Gastrocnemius medialis (tissue), 4 donors: ENCODE measurements at regions of chr22 and their contacts with region 1.

Region 1: GRCh38 chr22:38872172-38872830 is at the start of gene CBX6:
- DNase-seq: peak; percentile 91 to 93
- ATAC-seq: peak; percentile 83 to 87
- H3K4me3 ChIP-seq: peak within 1 kb of the TSS; percentile 77 to 98 (median 90)
- H3K27ac ChIP-seq: peak within 1 kb of the TSS; percentile 86 to 99 (median 97)
- H3K4me1 ChIP-seq: peaks cover 12 to 32% of the 10 kb centered on the region in 2 donors
- H3K27me3 ChIP-seq: no peaks in the 10 kb centered on the region
- CTCF ChIP-seq: peak in 2 of 5 experiments; percentile 25 to 41
- POLR2A ChIP-seq: peak; percentile 74 to 79
- total RNA-seq, gene CBX6: 8.4 to 21.5 (median 17.7) TPM

Region 2: GRCh38 chr22:38766076-38766777 is 106.1 kb before region 1 on chr22:
- in situ Hi-C with region 1: no loop called
- intact Hi-C with region 1: loop called (anchors 10 kb)
- DNase-seq: peak; percentile 68 to 71
- ATAC-seq: peak; percentile 76 to 79
- H3K4me3 ChIP-seq: no peak overlapping the region
- H3K27ac ChIP-seq: no peak overlapping the region
- H3K4me1 ChIP-seq: peaks cover 4 to 11% of the 10 kb centered on the region in 2 donors
- H3K27me3 ChIP-seq: peaks cover 0 to 14% (median 8%) of the 10 kb centered on the region in 3 donors
- CTCF ChIP-seq: peak; percentile 58 to 81 (median 75)
- POLR2A ChIP-seq: no peak

Region 3: DNA sequence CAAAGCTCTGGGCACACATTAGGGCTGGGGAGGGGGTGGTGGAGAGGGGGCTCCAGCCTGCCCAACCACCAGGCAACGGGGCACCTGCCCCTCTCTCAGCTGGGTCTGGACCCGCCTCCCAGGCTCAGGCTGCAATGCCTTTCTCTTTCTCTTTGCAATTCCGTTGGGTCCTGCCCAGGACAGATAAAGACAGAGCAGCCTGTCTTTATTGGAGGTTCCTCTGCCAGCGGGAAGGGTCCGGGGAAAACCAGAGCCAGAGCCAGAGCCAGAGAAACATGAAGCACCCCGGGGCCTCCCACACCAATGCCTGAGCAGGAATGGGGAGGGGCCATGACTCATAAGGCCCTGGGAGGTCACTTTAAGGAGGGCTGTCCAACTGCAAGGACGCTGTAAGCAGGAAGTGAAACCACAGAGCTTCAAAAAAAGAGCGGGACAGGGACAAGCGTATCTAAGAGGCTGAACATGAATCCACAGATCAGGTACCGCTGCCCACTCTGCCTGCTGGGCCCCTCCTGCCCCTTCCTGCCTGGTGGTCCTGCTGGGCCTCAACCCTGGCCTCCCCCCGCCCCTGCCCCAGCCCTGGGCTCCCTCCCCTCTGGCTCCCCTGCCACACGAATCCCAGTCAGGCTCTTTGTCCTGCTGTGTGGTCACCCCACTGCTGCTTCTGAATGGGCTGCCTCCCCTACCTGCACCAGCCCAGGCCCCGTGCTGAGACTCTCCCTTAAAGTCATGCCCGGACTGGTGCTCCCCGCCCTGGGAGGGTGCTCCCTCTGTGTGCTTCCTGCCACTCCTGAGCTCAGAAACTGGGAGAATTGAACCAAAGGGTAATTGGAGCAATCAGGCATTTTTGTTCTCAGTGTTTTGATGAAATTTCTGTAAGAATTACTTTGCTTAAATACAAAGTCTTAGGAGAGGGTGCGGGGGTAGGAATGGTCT is 110.0 kb after region 1 on chr22 and contains the start of gene APOBEC3B:
- in situ Hi-C with region 1: no loop called
- intact Hi-C with region 1: loop called (anchors 5 kb)
- DNase-seq: peak; percentile 73 to 85
- ATAC-seq: peak; percentile 98 to 100
- H3K4me3 ChIP-seq: peak within 1 kb of the TSS in 3 of 4 donors; percentile 56 to 68 (median 57)
- H3K27ac ChIP-seq: peak within 1 kb of the TSS in 2 of 4 donors; percentile 33 to 42
- H3K4me1 ChIP-seq: peaks cover 9 to 13% of the 10 kb centered on the region in 2 donors
- H3K27me3 ChIP-seq: no peaks in the 10 kb centered on the region
- CTCF ChIP-seq: no peak
- POLR2A ChIP-seq: no peak
- total RNA-seq, gene APOBEC3B: 0.62 TPM in 1 of 4 donors, not detected in the others

Region 4: DNA sequence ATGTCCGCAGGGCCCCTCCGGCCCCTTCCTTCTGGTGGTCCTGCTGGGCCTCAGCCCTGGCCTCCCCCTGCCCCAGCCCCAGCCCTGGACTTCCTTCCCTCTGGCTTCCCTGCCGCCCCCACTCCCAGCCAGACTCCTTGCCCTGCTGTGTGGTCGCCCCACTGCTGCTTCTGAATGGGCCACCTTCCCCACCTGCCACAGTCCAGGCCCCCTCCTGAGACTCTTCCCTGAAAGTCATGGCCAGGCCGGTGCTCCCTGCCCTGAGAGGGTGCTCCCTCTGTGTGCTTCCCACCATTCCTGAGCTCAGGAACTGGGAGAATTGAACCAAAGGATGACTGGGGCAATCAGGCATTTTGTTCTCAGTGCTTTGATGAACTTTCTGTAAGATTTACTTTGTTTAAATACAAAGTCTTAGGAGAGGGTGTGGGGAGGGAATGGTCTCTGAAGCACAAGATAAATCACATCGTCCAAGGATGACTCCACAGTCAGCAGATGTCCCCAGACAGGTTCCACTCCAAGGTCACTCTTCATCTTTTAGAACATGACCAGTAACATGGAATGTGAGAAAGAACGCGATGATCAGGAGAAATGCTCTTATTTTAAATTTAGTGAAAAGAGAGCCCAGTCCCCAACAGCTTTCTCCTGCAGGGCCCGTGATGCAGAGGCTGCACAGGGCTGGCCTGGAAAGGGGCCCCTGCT is 149.4 kb after region 1 on chr22:
- in situ Hi-C with region 1: no loop called
- intact Hi-C with region 1: no loop called
- DNase-seq: no peak
- ATAC-seq: no peak
- H3K4me3 ChIP-seq: peak overlapping the region; percentile 40 to 49 (median 48)
- H3K27ac ChIP-seq: peak overlapping the region; percentile 52 to 73 (median 66)
- H3K4me1 ChIP-seq: no peaks in the 10 kb centered on the region
- H3K27me3 ChIP-seq: no peaks in the 10 kb centered on the region
- CTCF ChIP-seq: no peak
- POLR2A ChIP-seq: no peak

Region 5: GRCh38 chr22:39123751-39124601 is 251.7 kb after region 1 on chr22:
- in situ Hi-C with region 1: loop called in 2 of 4 experiments (anchors 10 kb)
- intact Hi-C with region 1: loop called (anchors 5 kb)
- DNase-seq: no peak
- ATAC-seq: no peak
- H3K4me3 ChIP-seq: no peak overlapping the region
- H3K27ac ChIP-seq: no peak overlapping the region
- H3K4me1 ChIP-seq: no peaks in the 10 kb centered on the region
- H3K27me3 ChIP-seq: peaks cover under 1 to 4% (median under 1%) of the 10 kb centered on the region in 3 donors
- CTCF ChIP-seq: no peak
- POLR2A ChIP-seq: no peak

Region 6: GRCh38 chr22:39236321-39237317 is 364.3 kb after region 1 on chr22:
- in situ Hi-C with region 1: no loop called
- intact Hi-C with region 1: loop called (anchors 5 kb)
- DNase-seq: peak; percentile 89 to 95
- ATAC-seq: peak; percentile 57 to 67
- H3K4me3 ChIP-seq: peak overlapping the region in 2 of 4 donors; percentile 0 to 3
- H3K27ac ChIP-seq: peak overlapping the region; percentile 91 to 97 (median 92)
- H3K4me1 ChIP-seq: peaks cover 77 to 90% of the 10 kb centered on the region in 2 donors
- H3K27me3 ChIP-seq: no peaks in the 10 kb centered on the region
- CTCF ChIP-seq: no peak
- POLR2A ChIP-seq: no peak